ENCODE measurements at regions of chr10 and their contacts with region 1.

Region 1: GRCh38 chr10:104139221-104139620 is 17.2 kb downstream of the SFR1 start:
- DNase-seq: no peak
- ATAC-seq: no peak
- H3K4me3 Mint-ChIP-seq: no peak overlapping the region
- H3K27ac Mint-ChIP-seq: no peak overlapping the region
- H3K4me1 Mint-ChIP-seq: peaks cover 22% of the 10 kb centered on the region
- H3K27me3 Mint-ChIP-seq: no peaks in the 10 kb centered on the region; the same call in 1 of the 2 replicates
- CTCF ChIP-seq: peak; percentile 24; the same call in 1 of the 2 replicates

Region 2: GRCh38 chr10:104127411-104127810 is 11.8 kb before region 1 on chr10:
- CTCF ChIA-PET with region 1: interaction called, 22 read pairs
- POLR2A ChIA-PET with region 1: interaction called, 6 read pairs
- DNase-seq: peak; percentile 34
- ATAC-seq: peak; percentile 87
- H3K4me3 Mint-ChIP-seq: no peak overlapping the region
- H3K27ac Mint-ChIP-seq: peak overlapping the region; percentile 25; the same call in 1 of the 2 replicates
- H3K4me1 Mint-ChIP-seq: peaks cover 28% of the 10 kb centered on the region
- H3K27me3 Mint-ChIP-seq: no peaks in the 10 kb centered on the region; the same call in 1 of the 2 replicates
- CTCF ChIP-seq: no peak

Region 3: DNA sequence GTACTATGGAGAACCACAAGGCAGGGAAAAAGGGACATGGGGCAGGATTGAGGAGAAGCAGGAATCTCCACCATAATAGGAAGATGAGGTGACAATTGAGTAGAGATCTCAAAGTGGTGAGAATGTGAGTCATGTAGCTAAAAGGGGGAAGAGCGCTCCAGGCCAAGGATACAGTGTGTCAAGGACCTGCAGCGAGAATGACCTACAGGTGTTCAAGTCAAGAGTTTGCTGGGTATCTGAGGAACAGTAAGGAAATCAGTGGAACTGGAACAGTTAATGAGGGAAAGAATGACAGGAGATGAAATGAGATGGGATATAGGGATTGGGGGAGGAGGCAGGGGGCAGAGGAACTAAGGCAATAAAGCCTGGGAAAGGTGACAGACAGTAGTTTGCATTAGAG is 16.4 kb after region 1 on chr10:
- CTCF ChIA-PET with region 1: interaction called, 11 read pairs
- POLR2A ChIA-PET with region 1: interaction called, 3 read pairs
- DNase-seq: no peak
- ATAC-seq: no peak
- H3K4me3 Mint-ChIP-seq: no peak overlapping the region; the same call in 1 of the 2 replicates
- H3K27ac Mint-ChIP-seq: no peak overlapping the region
- H3K4me1 Mint-ChIP-seq: peaks cover 19% of the 10 kb centered on the region
- H3K27me3 Mint-ChIP-seq: peaks cover 3% of the 10 kb centered on the region; the same call in 1 of the 2 replicates
- CTCF ChIP-seq: no peak

Region 4: GRCh38 chr10:104327745-104328645 is 188.8 kb after region 1 on chr10:
- CTCF ChIA-PET with region 1: no interaction called
- POLR2A ChIA-PET with region 1: no interaction called
- DNase-seq: no peak
- ATAC-seq: peak; percentile 48
- H3K4me3 Mint-ChIP-seq: peak overlapping the region; percentile 52
- H3K27ac Mint-ChIP-seq: peak overlapping the region; percentile 98
- H3K4me1 Mint-ChIP-seq: peaks cover 97% of the 10 kb centered on the region
- H3K27me3 Mint-ChIP-seq: no peaks in the 10 kb centered on the region
- CTCF ChIP-seq: no peak